ENCODE measurements at regions of chr6 and their contacts with region 1.

Region 1: GRCh38 chr6:10837995-10838793 is at the start of gene MAK:
- DNase-seq: peak; percentile 86
- H3K4me3 Mint-ChIP-seq: peak within 1 kb of the TSS; percentile 74
- H3K27ac Mint-ChIP-seq: peak within 1 kb of the TSS; percentile 85
- H3K4me1 Mint-ChIP-seq: peaks cover 17% of the 10 kb centered on the region
- H3K27me3 Mint-ChIP-seq: peaks cover 50% of the 10 kb centered on the region
- total RNA-seq, gene MAK: 0.12 to 0.14 TPM

Region 2: GRCh38 chr6:10528170-10528981 is 309.8 kb before region 1 on chr6:
- CTCF ChIA-PET with region 1: no interaction called
- intact Hi-C with region 1: loop called (anchors 1 kb)
- DNase-seq: peak; percentile 38
- H3K4me3 Mint-ChIP-seq: peak overlapping the region; percentile 80
- H3K27ac Mint-ChIP-seq: peak overlapping the region; percentile 71
- H3K4me1 Mint-ChIP-seq: peaks cover 48% of the 10 kb centered on the region
- H3K27me3 Mint-ChIP-seq: no peaks in the 10 kb centered on the region

Region 3: GRCh38 chr6:10722820-10723566 is 115.2 kb before region 1 on chr6 and contains the start of gene TMEM14C:
- CTCF ChIA-PET with region 1: no interaction called
- intact Hi-C with region 1: loop called (anchors 2 kb)
- DNase-seq: peak; percentile 94
- H3K4me3 Mint-ChIP-seq: peak within 1 kb of the TSS; percentile 89
- H3K27ac Mint-ChIP-seq: peak within 1 kb of the TSS; percentile 91
- H3K4me1 Mint-ChIP-seq: peaks cover 44% of the 10 kb centered on the region
- H3K27me3 Mint-ChIP-seq: no peaks in the 10 kb centered on the region
- total RNA-seq, gene TMEM14C: 77.0 to 81.1 TPM

Region 4: DNA sequence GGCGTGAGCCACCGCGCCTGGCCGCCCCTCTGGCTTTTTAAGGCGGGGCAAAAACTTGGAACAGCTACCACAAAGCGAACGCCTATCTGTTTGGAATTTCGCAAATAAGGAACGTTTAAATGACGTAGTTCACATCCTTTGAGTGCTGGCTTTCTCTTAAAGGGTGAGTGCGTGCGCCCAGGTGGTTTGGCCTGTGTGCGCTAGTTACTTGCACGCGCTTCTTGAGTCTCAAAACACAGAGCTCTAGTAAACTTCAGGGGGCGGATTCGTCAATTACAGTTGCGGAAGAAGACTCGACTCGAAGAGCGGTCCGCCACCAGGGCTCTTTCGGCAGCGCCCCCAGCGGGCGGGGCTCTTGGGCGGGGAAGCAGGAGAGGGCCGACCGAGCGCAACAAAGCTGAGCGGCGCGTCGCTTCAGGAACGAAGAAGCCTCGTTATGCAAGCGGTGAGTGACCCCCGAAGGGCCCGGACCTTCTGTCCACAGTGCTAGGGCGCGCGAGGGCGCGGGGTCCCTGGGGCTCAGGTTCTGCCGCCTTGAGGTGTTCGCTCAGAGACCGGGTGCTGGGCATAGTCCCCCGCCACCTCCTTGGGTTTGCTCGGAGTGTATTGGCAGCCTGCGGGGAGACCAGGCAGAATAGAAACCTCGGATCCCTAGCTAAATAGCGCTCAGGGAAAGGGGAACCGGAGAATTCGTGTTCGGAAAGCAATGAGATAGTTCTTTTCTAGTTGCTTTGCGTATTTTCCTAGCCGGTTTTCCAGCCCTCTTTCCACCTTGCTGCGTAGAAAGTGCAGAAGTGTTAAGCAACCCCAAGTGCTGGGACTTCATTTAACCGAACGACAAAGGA is 48.7 kb after region 1 on chr6 and contains the start of gene SYCP2L:
- CTCF ChIA-PET with region 1: no interaction called
- intact Hi-C with region 1: loop called (anchors 2 kb)
- DNase-seq: peak; percentile 7
- H3K4me3 Mint-ChIP-seq: peak within 1 kb of the TSS; percentile 60
- H3K27ac Mint-ChIP-seq: no peak within 1 kb of the TSS
- H3K4me1 Mint-ChIP-seq: peaks cover 15% of the 10 kb centered on the region
- H3K27me3 Mint-ChIP-seq: peaks cover 70% of the 10 kb centered on the region
- total RNA-seq, gene SYCP2L: not detected

Region 5: GRCh38 chr6:11537229-11538051 is 699.2 kb after region 1 on chr6 and contains the start of gene TMEM170B:
- CTCF ChIA-PET with region 1: no interaction called
- intact Hi-C with region 1: loop called (anchors 5 kb)
- DNase-seq: peak; percentile 84
- H3K4me3 Mint-ChIP-seq: peak within 1 kb of the TSS; percentile 78
- H3K27ac Mint-ChIP-seq: no peak within 1 kb of the TSS
- H3K4me1 Mint-ChIP-seq: peaks cover 9% of the 10 kb centered on the region
- H3K27me3 Mint-ChIP-seq: peaks cover 6% of the 10 kb centered on the region
- total RNA-seq, gene TMEM170B: 0.40 to 0.57 TPM